ENCODE measurements at regions of chr3 and their contacts with region 1.

Region 1: DNA sequence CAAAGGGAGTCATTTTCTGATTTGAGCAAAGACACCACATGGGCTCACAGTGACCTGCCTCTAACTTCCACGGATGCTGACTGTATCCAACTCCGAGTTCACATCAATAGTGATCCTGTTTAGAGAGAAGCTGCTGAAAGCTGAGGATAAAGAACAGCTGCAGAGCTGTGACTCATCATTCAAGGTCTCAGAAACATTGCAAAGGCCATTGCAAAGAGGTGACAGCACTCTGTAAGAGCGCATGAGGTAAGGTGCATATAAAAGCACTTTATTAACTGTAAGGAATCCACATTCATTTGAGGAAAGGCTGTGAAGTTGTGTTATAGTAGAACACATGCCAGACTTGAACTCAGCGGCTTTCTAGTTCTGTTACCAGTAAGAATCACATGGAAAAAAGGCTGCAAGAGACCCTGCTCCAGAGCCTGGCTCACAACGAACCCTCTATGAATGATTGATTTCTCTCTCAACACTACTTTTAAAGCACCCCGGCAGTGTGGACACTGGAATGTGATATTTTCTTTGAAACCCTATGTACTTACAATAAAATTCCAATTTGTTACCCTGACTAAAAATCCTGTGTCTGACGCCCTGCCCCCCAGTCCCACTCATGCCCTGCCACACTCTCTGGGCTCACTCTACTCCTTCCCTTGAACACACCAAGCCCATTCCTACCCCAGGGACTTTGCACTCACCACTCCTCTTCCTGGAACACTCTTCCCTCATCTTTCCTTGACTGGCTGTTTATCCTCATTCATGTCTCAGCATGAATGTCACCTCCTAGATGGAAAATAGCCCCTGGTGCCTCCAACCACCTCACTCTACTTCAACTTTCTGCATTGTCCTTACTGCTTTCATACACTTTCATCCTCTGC is 111.2 kb downstream of the LSM3 start:
- DNase-seq: peak; percentile 62 to 79
- ATAC-seq: peak; percentile 84 to 88
- H3K4me3 ChIP-seq: no peak overlapping the region
- H3K27ac ChIP-seq: peak overlapping the region; percentile 84 to 94 (median 90)
- H3K4me1 ChIP-seq: peaks cover 29 to 49% of the 10 kb centered on the region in 2 donors
- H3K27me3 ChIP-seq: no peaks in the 10 kb centered on the region
- CTCF ChIP-seq: no peak
- POLR2A ChIP-seq: peak; percentile 41 to 54

Region 2: DNA sequence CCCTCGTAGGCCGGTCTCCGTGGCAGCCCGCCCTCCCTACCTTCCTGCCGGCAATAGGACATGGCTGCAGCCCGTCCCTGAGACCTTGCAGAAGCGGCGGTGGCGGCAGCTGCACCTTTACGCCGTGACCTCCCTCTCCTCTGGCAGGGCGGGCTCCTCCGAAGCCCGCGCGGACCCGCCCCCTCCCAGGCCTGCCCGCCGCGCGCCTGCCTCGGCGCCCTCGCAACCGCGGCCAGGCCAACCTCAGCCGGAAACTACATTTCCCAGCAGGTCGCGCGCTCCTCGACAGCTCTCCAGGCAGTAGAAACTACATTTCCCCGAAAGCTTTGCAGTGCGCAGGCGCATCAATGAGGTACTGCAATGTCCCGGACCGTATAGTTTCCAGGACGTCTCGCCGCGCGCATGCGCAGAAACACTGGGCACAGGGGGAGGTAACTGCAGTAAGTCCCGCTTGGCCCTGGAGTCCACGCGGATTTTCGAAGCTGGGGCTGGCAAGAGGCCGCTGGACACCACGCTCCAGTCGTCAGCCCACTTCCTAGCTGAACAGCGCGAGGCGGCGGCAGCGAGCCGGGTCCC is 165.1 kb before region 1 on chr3 and contains the starts of genes CHCHD4 and TMEM43:
- in situ Hi-C with region 1: no loop called
- intact Hi-C with region 1: loop called (anchors 10 kb)
- DNase-seq: peak; percentile 99 to 100
- ATAC-seq: peak; percentile 77 to 80
- H3K4me3 ChIP-seq: peak within 1 kb of the TSS; percentile 68 to 91 (median 72)
- H3K27ac ChIP-seq: peak within 1 kb of the TSS; percentile 92 to 98 (median 94)
- H3K4me1 ChIP-seq: peaks cover 33 to 41% of the 10 kb centered on the region in 2 donors
- H3K27me3 ChIP-seq: no peaks in the 10 kb centered on the region
- CTCF ChIP-seq: peak in 1 of 5 experiments; percentile 11
- POLR2A ChIP-seq: peak; percentile 90 to 92
- total RNA-seq, gene CHCHD4: 16.2 to 49.4 (median 22.8) TPM
- total RNA-seq, gene TMEM43: 68.2 to 128 (median 78.6) TPM

Region 3: DNA sequence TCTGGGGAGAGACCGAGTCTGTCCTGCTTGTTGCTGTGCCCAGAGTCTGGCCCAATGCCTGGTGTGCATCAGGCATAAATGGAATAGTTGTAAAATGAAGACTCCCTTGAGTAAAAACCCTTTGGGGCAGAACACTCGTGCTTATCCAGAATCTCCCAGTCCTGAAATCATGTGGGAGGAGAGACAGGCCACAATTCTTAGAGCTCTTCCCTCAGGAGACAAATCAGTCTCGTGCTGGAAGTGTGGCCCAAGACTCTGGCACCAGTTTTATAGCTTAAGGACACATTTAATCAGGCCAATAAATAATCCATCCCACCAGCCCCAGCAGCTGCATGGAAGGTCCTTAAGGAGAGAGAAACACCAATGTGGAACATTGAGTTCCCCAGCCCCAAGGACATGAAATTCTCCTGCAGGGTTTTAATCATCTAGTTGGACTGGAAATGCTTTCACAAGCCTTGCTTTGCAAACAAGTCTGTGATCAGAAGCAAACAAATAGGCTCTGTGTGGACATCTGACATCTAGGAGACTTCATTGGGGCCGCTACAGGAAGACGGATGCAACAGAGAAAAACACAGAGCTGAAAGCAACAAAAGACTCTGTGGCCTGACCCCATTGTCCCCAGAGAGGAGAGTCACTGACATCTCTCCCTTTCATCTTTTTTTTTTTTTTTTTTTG is 40.8 kb before region 1 on chr3:
- in situ Hi-C with region 1: no loop called
- intact Hi-C with region 1: no loop called
- DNase-seq: peak; percentile 33 to 76
- ATAC-seq: peak; percentile 77 to 84
- H3K4me3 ChIP-seq: no peak overlapping the region
- H3K27ac ChIP-seq: peak overlapping the region; percentile 14 to 60 (median 30)
- H3K4me1 ChIP-seq: no peaks in the 10 kb centered on the region
- H3K27me3 ChIP-seq: no peaks in the 10 kb centered on the region
- CTCF ChIP-seq: no peak
- POLR2A ChIP-seq: no peak

Region 4: DNA sequence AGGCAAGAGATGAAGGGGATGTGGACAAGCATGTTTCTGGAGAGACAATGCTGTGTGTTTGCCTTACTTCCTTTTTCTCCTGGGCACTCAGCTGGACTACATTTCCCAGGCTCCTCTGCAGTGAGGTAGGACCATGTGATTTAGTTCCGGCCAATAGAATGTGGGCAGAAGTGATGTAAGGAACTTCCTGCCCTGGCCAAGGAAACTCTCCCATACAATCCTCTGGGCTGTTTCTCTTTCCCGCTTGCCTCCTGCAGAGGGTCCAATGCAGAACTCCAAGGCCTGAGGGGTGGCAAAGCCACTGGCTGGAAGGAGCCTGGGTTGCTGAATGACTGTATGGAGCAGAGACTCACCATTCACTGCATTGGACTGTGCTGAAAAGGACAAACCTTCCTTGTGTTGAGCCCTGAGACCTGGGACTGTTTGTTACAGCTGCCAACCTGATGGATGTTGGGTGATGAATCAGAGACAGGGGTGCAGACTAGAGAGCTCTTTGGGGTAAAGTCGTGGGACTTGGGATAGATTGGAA is 29.9 kb after region 1 on chr3:
- in situ Hi-C with region 1: no loop called
- intact Hi-C with region 1: loop called (anchors 1 kb)
- DNase-seq: peak in 1 of 2 donors; percentile 58
- ATAC-seq: peak in 1 of 2 donors; percentile 16
- H3K4me3 ChIP-seq: no peak overlapping the region
- H3K27ac ChIP-seq: peak overlapping the region; percentile 78 to 95 (median 88)
- H3K4me1 ChIP-seq: peaks cover 30 to 35% of the 10 kb centered on the region in 2 donors
- H3K27me3 ChIP-seq: no peaks in the 10 kb centered on the region
- CTCF ChIP-seq: no peak
- POLR2A ChIP-seq: no peak

Region 5: DNA sequence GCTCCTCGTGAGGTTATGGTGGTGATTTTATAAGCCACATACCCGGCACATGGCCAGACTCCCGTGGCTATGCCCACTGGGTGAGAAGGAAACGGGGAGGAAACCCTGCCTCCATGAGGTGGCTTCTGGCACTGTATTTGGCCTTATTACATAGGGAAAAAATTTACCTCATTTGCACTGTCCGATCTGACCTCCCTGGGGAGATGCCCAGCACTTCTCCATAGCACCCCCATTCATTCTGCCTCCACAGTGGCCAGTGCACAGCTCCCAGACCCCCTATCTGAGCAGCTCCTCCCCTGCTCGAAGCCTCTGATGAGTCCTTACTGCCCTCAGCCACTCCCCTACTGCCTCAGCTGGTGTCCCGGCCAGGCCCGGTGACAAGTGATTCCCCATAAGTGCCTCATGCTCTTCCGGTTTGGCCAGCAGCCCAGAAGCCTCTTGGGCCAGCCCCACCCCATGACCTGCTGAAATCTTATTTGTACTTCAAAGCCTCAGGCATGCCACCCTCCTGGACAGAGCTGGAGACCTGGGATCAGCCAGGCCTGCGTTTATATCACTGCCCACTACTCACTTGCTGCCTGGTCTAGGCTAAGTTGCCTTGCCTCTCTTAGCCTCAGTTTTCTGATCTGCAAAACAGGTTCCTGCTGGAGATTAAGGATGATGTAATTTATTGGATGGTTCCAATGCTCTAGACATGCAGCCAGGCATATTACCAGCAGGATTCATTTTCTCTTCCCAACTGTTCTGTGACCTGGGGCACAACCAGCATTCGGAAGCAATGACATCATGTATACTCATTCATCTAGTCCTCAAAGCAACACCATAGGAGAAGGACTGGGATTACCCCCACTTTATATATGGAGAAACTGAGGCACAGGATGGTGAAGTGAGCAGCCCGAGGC is 82.0 kb after region 1 on chr3:
- in situ Hi-C with region 1: no loop called
- intact Hi-C with region 1: loop called (anchors 2 kb)
- DNase-seq: peak; percentile 91 to 96
- ATAC-seq: peak; percentile 71 to 75
- H3K4me3 ChIP-seq: no peak overlapping the region
- H3K27ac ChIP-seq: peak overlapping the region; percentile 84 to 91 (median 85)
- H3K4me1 ChIP-seq: peaks cover 56 to 64% of the 10 kb centered on the region in 2 donors
- H3K27me3 ChIP-seq: no peaks in the 10 kb centered on the region
- CTCF ChIP-seq: peak in 1 of 5 experiments; percentile 23
- POLR2A ChIP-seq: peak; percentile 67 to 73

Region 6: GRCh38 chr3:14452679-14453367 is 163.0 kb after region 1 on chr3:
- in situ Hi-C with region 1: no loop called
- intact Hi-C with region 1: loop called (anchors 5 kb)
- DNase-seq: peak; percentile 77 to 92
- ATAC-seq: peak; percentile 67 to 71
- H3K4me3 ChIP-seq: peak overlapping the region in 1 of 4 donors; percentile 19
- H3K27ac ChIP-seq: peak overlapping the region; percentile 83 to 93 (median 88)
- H3K4me1 ChIP-seq: peaks cover 45% of the 10 kb centered on the region in 2 donors
- H3K27me3 ChIP-seq: no peaks in the 10 kb centered on the region
- CTCF ChIP-seq: peak in 2 of 5 experiments; percentile 7 to 24
- POLR2A ChIP-seq: peak; percentile 15 to 24

Region 7: GRCh38 chr3:14633819-14634424 is 344.1 kb after region 1 on chr3:
- in situ Hi-C with region 1: no loop called
- intact Hi-C with region 1: no loop called
- DNase-seq: no peak
- ATAC-seq: peak in 1 of 2 donors; percentile 55
- H3K4me3 ChIP-seq: no peak overlapping the region
- H3K27ac ChIP-seq: no peak overlapping the region
- H3K4me1 ChIP-seq: no peaks in the 10 kb centered on the region
- H3K27me3 ChIP-seq: peaks cover 0 to 4% (median 3%) of the 10 kb centered on the region in 3 donors
- CTCF ChIP-seq: peak; percentile 30 to 76 (median 58)
- POLR2A ChIP-seq: no peak